Dorsolateral prefrontal cortex (tissue), 120 donors: ENCODE measurements at regions of chr17 and their contacts with region 1.

Region 1: GRCh38 chr17:59707114-59707970 is at the starts of genes PTRH2 and VMP1:
- DNase-seq: peak; percentile 97 to 100 (median 98)
- H3K4me3 ChIP-seq: peak within 1 kb of the TSS; percentile 37 to 100 (median 91)
- H3K27ac ChIP-seq: peak within 1 kb of the TSS; percentile 6 to 96 (median 86)
- H3K27me3 ChIP-seq: no peaks in the 10 kb centered on the region
- CTCF ChIP-seq: peak in 29 of 56 donors; percentile 10 to 58 (median 33)
- total RNA-seq, gene PTRH2: 9.8 to 28.4 (median 20.0) TPM
- total RNA-seq, gene VMP1: 80.9 to 231 (median 127) TPM

Region 2: GRCh38 chr17:59619293-59620063 is 87.9 kb before region 1 on chr17 and contains the start of gene CLTC:
- intact Hi-C with region 1: loop called (anchors 5 to 10 kb)
- DNase-seq: peak; percentile 80 to 98 (median 92)
- H3K4me3 ChIP-seq: peak within 1 kb of the TSS; percentile 57 to 98 (median 89)
- H3K27ac ChIP-seq: peak within 1 kb of the TSS; percentile 96 to 100 (median 99)
- H3K27me3 ChIP-seq: no peaks in the 10 kb centered on the region
- CTCF ChIP-seq: peak in 27 of 56 donors; percentile 1 to 51 (median 13)
- total RNA-seq, gene CLTC: 248 to 525 (median 428) TPM

Region 3: DNA sequence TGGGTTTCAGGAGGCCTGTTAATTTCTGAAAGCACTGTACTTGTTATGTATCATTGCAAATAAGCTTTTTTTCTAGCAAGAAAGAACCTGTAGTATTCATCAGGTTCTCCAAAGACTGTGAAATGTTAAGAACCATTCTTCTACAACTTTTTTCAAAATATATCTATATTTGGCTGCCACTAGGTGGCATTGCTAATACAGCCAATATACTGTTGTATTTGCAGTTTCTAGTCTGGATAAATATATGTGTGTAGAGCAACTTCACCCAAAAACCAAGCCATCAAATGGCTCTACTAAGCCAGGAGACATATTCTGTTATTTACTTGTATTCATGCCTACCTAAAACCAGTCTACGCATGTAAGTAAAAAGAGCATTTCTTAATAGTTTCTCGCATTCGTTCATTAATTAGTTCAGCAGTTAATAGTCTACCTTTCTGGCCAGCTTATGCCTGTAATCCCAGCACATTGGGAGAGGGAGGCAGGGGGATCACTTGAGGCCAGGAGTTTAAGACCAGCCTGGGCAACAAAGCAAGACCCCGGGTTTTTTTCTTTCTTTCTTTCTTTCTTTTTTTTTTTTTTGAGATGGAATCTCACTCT is 39.6 kb after region 1 on chr17:
- intact Hi-C with region 1: loop called in 1 of 2 experiments (anchors 5 kb)
- DNase-seq: no peak
- H3K4me3 ChIP-seq: no peak overlapping the region
- H3K27ac ChIP-seq: peak overlapping the region in 11 of 59 donors; percentile 4 to 46 (median 29)
- H3K27me3 ChIP-seq: no peaks in the 10 kb centered on the region
- CTCF ChIP-seq: peak; percentile 53 to 82 (median 68)